H1 (cell line): ENCODE measurements at regions of chr2 and their contacts with region 1.

Region 1: DNA sequence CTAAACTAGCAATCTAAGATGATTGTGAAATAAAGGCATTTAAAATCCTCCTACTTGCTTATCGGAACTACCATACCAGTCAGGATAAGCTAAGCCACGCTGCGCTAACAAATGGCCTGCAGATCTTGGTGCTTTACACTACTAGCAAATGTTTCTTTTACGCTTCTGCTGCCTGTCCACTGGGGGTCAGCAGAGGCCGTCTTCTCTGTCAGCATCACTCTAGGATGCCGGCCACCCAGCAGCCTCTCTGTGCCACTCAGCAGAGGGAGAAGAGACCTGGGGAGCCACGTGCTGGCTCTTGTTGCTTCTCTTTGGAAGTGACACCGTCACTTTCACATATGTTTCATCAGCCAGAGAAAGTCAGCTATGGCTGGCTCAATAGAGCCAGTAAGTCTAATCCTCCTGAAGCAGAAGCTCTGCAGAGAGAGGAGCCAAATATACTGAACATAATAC is 36.6 kb downstream of the COPS8 start:
- DNase-seq: peak; percentile 44 to 81
- H3K4me3 ChIP-seq: no peak overlapping the region
- H3K27ac ChIP-seq: no peak overlapping the region
- H3K4me1 ChIP-seq: no peaks in the 10 kb centered on the region
- H3K27me3 ChIP-seq: no peaks in the 10 kb centered on the region
- CTCF ChIP-seq: peak; percentile 64 to 82 (median 75)
- EP300 ChIP-seq: no peak
- POLR2A ChIP-seq: no peak
- RAD21 ChIP-seq: peak; percentile 80 to 88

Region 2: DNA sequence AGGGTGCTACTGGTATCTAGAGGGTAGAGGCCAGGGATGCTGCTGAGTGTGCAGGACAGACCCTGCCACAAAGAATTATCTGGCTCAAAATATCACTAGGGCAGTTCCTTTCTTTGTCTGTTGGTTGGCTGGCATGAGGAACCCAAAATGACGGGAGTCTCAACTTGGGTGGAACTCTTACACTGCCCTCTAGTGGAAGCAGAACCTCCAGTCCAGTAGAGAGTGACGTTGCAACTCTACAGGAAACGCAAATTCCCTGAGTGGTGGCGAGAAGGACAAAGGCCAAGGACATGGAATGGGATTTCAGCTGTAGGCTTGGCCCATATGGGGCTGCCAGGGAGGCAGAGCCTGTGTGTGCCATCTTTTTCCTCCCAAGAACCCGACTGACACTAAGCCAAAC is 10.6 kb after region 1 on chr2:
- CTCF ChIA-PET with region 1: interaction called, 30 read pairs
- POLR2A ChIA-PET with region 1: interaction called, 3 read pairs
- DNase-seq: peak; percentile 29 to 62
- H3K4me3 ChIP-seq: no peak overlapping the region
- H3K27ac ChIP-seq: no peak overlapping the region
- H3K4me1 ChIP-seq: peaks cover 2 to 6% (median 3%) of the 10 kb centered on the region in 4 experiments; a peak in 6 of 7 replicates
- H3K27me3 ChIP-seq: no peaks in the 10 kb centered on the region; a peak in 1 of 7 replicates
- CTCF ChIP-seq: peak; percentile 52 to 84 (median 64)
- EP300 ChIP-seq: no peak
- POLR2A ChIP-seq: no peak
- RAD21 ChIP-seq: peak; percentile 44 to 63

Region 3: DNA sequence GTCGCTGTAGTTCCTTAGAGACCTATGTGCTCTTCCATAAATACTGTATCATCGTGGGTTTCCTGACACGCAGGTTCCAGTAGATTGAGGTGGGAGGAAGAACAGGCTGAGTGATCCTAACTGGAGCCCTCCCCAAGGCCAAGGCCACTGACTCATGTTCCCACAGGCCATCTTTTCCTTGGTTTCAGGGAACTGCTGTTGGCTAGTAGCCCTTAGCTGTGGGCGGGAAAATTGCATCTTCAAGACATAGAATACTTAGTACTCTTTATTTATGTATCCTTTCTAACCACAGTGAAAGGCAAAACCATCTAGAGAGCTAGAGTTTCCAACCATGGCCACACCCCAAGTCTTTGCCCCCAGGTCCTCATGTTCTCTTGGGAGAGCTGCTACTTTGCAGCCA is 19.3 kb after region 1 on chr2:
- CTCF ChIA-PET with region 1: interaction called, 13 read pairs
- POLR2A ChIA-PET with region 1: no interaction called
- DNase-seq: no peak
- H3K4me3 ChIP-seq: no peak overlapping the region
- H3K27ac ChIP-seq: no peak overlapping the region
- H3K4me1 ChIP-seq: no peaks in the 10 kb centered on the region
- H3K27me3 ChIP-seq: peaks cover 0 to 3% (median 0%) of the 10 kb centered on the region in 4 experiments; a peak in 1 of 7 replicates
- CTCF ChIP-seq: no peak
- EP300 ChIP-seq: no peak
- POLR2A ChIP-seq: no peak
- RAD21 ChIP-seq: no peak